Activated naive CD8-positive, alpha-beta T cell treated with anti-CD3 and anti-CD28 coated beads, Interleukin-2, amount 10 ng/mL, durations not matched to agents 7 days and 5 days (primary cell): ENCODE measurements at regions of chr6 and their contacts with region 1.

Region 1: GRCh38 chr6:26031595-26032339 is 55.5 kb upstream of the HFE start:
- DNase-seq: peak; percentile 84
- ATAC-seq: peak; percentile 66
- H3K4me3 Mint-ChIP-seq: peak overlapping the region; percentile 88
- H3K27ac Mint-ChIP-seq: peak overlapping the region; percentile 98
- H3K4me1 Mint-ChIP-seq: peaks cover 66% of the 10 kb centered on the region
- H3K27me3 Mint-ChIP-seq: peaks cover 3% of the 10 kb centered on the region

Region 2: DNA sequence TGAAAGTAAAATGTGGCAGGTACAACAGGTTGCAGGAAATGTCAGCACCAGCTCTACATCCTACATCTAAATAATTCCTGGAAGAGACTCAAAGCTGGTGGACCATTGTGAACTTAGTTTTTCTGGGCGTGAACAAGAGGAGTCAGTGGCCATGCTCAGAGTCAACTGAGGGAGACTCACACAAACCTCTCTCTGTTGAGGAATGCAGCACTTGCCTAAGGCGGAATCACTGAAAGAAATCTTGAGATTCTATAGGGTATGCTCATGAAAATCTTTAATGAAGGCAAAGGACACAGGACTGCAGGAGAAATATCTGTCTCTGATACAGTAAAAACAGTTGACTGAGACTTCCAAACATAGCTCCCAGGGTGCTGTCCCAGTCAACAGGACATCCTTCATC is 254.7 kb before region 1 on chr6:
- POLR2A ChIA-PET with region 1: no interaction called
- DNase-seq: no peak
- ATAC-seq: no peak
- H3K4me3 Mint-ChIP-seq: no peak overlapping the region
- H3K27ac Mint-ChIP-seq: no peak overlapping the region
- H3K4me1 Mint-ChIP-seq: peaks cover 12% of the 10 kb centered on the region
- H3K27me3 Mint-ChIP-seq: peaks cover 5% of the 10 kb centered on the region

Region 3: DNA sequence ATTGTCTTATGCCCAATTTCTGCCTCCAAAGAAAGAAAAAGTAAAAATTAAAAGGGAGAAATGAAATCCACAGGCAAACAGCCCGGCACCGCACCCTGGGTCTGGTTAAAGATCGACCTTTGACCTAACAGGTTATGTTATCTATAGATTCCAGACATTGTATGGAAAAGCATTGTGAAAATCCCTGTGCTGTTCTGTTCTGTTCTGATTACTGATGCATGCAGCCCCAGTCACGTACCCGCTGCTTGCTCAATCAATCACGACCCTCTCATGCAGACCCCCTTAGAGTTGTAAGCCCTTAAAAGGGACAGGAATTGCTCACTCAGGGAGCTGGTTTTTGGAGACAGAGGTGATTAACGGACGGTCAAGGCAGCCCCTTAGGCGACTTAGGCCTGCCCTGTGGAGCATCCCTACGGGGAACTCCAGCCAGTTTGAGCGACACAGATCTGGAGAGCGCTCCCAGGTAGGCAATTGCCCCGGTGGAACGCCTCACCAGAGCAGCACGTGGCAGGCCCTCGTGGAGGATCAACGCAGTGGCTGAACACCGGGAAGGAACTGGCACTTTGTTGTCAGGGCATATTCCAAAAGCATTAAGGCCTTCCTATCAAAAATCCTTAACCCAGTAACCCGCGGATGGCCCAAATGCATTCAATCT is 43.4 kb after region 1 on chr6:
- POLR2A ChIA-PET with region 1: no interaction called
- DNase-seq: no peak
- ATAC-seq: no peak
- H3K4me3 Mint-ChIP-seq: no peak overlapping the region
- H3K27ac Mint-ChIP-seq: no peak overlapping the region
- H3K4me1 Mint-ChIP-seq: peaks cover 6% of the 10 kb centered on the region
- H3K27me3 Mint-ChIP-seq: peaks cover 14% of the 10 kb centered on the region

Region 4: DNA sequence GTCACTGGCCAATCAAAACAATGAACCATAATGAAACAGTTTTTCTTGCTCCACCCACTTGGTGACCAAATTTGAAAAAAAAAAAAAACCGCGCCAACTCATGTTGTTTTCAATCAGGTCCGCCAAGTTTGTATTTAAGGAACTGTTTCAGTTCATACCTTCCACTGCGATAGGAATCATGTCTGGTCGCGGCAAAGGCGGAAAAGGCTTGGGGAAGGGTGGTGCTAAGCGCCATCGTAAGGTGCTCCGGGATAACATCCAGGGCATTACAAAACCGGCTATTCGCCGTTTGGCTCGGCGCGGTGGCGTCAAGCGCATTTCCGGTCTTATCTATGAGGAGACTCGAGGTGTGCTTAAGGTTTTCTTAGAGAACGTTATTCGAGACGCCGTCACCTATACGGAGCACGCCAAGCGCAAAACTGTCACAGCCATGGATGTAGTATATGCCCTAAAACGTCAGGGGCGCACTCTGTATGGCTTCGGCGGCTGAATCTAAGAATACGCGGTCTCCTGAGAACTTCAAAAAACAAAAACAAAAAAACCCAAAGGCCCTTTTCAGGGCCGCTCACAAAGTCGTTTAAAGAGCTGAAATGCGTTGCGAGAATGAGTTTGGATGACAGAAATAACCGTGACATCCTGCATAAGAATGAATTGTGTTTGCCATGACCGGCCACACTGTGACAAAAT is 72.1 kb after region 1 on chr6:
- POLR2A ChIA-PET with region 1: interaction called, 16 read pairs
- DNase-seq: peak; percentile 86
- ATAC-seq: peak; percentile 89
- H3K4me3 Mint-ChIP-seq: peak overlapping the region; percentile 93
- H3K27ac Mint-ChIP-seq: peak overlapping the region; percentile 100
- H3K4me1 Mint-ChIP-seq: peaks cover 18% of the 10 kb centered on the region
- H3K27me3 Mint-ChIP-seq: no peaks in the 10 kb centered on the region

Region 5: GRCh38 chr6:26204332-26205165 is 172.8 kb after region 1 on chr6:
- POLR2A ChIA-PET with region 1: interaction called, 291 read pairs
- DNase-seq: peak; percentile 84
- ATAC-seq: peak; percentile 64
- H3K4me3 Mint-ChIP-seq: no peak overlapping the region
- H3K27ac Mint-ChIP-seq: no peak overlapping the region
- H3K4me1 Mint-ChIP-seq: peaks cover 34% of the 10 kb centered on the region
- H3K27me3 Mint-ChIP-seq: no peaks in the 10 kb centered on the region

Region 6: GRCh38 chr6:26249957-26250697 is 218.4 kb after region 1 on chr6:
- POLR2A ChIA-PET with region 1: interaction called, 43 read pairs
- DNase-seq: peak; percentile 79
- ATAC-seq: peak; percentile 53
- H3K4me3 Mint-ChIP-seq: peak overlapping the region; percentile 90
- H3K27ac Mint-ChIP-seq: peak overlapping the region; percentile 99
- H3K4me1 Mint-ChIP-seq: peaks cover 16% of the 10 kb centered on the region
- H3K27me3 Mint-ChIP-seq: no peaks in the 10 kb centered on the region

Region 7: DNA sequence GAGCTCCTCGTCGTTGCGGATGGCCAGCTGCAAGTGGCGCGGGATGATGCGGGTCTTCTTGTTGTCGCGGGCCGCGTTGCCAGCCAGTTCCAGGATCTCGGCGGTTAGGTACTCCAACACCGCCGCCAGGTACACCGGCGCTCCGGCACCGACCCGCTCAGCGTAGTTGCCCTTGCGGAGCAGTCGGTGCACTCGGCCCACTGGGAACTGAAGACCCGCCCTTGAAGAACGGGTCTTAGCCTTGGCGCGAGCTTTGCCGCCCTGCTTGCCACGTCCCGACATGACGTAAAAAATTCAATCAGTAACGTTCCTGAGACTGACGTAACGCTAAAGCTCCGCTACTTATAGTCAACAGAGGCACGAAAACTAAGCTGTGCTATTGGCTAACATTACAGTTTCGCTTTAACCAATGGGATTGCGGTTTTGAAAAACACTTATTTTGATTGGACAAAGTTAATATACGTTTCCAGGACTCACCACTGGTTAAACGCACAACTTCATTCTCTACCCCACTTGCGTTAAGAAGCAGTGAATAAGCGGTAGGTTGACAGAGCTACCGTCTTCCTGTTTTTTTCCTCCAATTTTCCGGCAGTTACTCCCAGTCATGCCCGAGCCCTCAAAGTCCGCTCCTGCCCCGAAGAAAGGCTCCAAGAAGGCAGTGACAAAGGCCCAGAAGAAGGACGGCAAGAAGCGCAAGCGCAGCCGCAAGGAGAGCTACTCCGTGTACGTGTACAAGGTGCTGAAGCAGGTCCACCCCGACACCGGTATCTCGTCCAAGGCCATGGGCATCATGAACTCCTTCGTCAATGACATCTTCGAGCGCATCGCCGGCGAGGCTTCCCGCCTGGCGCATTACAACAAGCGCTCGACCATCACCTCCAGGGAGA is 1806.5 kb after region 1 on chr6:
- POLR2A ChIA-PET with region 1: interaction called, 39 read pairs
- DNase-seq: peak; percentile 84
- ATAC-seq: peak; percentile 74
- H3K4me3 Mint-ChIP-seq: no peak overlapping the region
- H3K27ac Mint-ChIP-seq: no peak overlapping the region
- H3K4me1 Mint-ChIP-seq: peaks cover 26% of the 10 kb centered on the region
- H3K27me3 Mint-ChIP-seq: peaks cover 2% of the 10 kb centered on the region